ENCODE measurements at regions of chr20 and their contacts with region 1.

Region 1: GRCh38 chr20:59495894-59496510 is 108.3 kb upstream of the PHACTR3 start:
- DNase-seq: peak; percentile 53
- ATAC-seq: peak; percentile 89
- H3K4me3 ChIP-seq: no peak overlapping the region
- H3K27ac ChIP-seq: no peak overlapping the region
- H3K4me1 ChIP-seq: no peaks in the 10 kb centered on the region
- H3K27me3 ChIP-seq: no peaks in the 10 kb centered on the region
- CTCF ChIP-seq: peak; percentile 79
- POLR2A ChIP-seq: no peak
- RAD21 ChIP-seq: peak; percentile 63

Region 2: GRCh38 chr20:59055295-59055694 is 440.7 kb before region 1 on chr20:
- CTCF ChIA-PET with region 1: no interaction called
- POLR2A ChIA-PET with region 1: no interaction called
- dilution Hi-C with region 1: no loop called
- in situ Hi-C with region 1: no loop called
- intact Hi-C with region 1: loop called (anchors 5 kb)
- DNase-seq: peak; percentile 37
- ATAC-seq: peak; percentile 60
- H3K4me3 ChIP-seq: no peak overlapping the region
- H3K27ac ChIP-seq: no peak overlapping the region
- H3K4me1 ChIP-seq: no peaks in the 10 kb centered on the region
- H3K27me3 ChIP-seq: peaks cover 19% of the 10 kb centered on the region
- CTCF ChIP-seq: peak; percentile 52
- POLR2A ChIP-seq: no peak
- RAD21 ChIP-seq: peak; percentile 54

Measured in IMR-90 (cell line).